ENCODE measurements at regions of chr22 and their contacts with region 1.

Region 1: GRCh38 chr22:41746567-41747400 is 47.5 kb downstream of the MEI1 start:
- DNase-seq: peak; percentile 42
- H3K4me3 ChIP-seq: no peak overlapping the region
- CTCF ChIP-seq: peak; percentile 91

Region 2: DNA sequence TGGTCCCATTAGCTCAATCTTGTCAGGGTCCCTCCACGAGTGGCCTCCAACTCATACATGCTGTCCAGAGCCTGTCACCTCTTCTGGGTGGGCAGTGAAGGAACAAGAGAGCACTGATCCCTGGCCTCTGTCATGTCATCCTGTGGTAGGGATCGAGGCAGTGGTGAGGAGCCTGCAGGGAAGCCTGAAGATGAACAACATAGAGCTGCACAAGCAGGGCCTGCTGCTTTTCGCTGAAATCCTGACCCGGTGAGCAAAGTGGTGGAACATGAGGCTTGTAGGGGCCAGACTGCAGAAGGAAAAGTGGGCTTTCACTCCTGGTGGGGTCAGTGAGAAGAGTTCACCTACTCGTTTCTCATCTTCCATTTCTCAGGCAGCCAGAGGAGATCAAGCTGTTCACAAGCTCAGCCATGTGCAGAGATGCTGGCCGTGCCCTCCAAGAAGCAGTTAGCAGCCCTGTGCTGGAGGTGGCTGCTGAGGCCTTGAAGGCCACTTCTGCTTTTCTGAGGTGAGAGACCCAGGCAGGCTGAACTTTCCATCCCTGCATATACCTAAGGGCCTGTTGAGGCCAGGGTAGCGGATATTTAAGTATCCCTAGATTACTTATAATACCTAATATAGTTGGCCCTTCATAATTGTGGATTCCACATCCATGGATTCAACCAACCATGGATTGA is 14.6 kb before region 1 on chr22:
- CTCF ChIA-PET with region 1: interaction called, 41 read pairs
- POLR2A ChIA-PET with region 1: no interaction called
- DNase-seq: no peak
- H3K4me3 ChIP-seq: no peak overlapping the region
- CTCF ChIP-seq: no peak

Region 3: DNA sequence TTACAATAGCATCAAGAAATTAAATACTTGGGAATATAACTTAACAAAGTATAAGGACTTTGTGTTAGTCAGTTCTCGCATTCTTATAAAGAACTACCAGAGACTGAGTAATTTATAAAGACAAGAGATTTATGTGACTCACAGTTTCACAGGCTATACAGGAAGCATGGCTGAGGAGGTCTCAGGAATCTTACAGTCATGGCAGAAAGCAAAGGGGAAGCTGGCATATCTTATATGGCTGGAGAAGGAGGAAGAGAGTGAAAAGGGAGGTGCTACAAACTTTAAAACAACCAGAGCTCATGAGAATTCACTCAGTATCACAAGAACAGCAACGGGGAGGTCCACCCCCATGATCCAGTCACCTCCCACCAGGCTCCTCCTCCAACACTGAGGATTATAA is 21.6 kb after region 1 on chr22:
- CTCF ChIA-PET with region 1: interaction called, 15 read pairs
- POLR2A ChIA-PET with region 1: no interaction called
- DNase-seq: no peak
- H3K4me3 ChIP-seq: no peak overlapping the region
- CTCF ChIP-seq: no peak

Region 4: DNA sequence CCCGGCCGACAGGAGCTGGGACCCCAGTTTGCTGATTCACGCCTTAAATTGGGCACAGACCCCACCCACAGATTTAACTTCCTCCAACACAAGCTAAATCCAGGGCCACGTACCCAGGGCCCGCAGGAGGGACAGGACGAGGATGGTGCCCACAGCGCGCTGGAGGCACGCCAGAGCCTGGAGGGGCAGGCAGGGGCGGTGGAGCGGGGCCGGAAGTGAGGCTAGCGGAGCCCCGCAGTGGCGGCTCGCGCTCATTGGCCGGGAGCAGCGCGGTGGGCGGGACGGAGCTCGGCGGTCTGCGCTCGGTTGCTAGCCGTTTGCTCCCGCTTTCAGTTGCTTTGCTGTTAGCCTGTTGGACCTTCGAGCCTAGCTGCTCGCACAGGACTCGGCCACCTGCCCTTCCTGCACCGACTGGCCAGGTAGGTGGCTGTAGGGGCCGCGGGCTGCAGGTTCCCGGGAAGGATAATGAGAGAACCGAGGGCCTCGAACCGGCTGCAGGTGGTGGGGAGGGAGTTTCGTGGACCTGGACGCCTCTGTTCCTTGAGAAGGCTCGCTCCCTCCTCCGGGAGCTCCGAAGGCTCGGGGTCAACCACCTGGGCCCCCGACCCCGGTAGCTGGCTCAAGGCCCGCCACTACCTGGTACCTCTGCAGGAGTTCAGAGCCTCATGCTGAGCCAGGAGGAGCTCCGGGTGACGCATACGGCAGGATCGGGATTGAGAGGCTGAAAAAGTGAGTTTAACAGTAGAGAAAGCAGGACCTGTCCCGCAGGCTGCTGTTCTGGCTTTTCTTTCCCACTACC is 53.8 kb after region 1 on chr22 and contains the start of gene CCDC134:
- CTCF ChIA-PET with region 1: interaction called, 15 read pairs
- POLR2A ChIA-PET with region 1: interaction called, 3 read pairs
- DNase-seq: no peak
- H3K4me3 ChIP-seq: peak within 1 kb of the TSS; percentile 99
- CTCF ChIP-seq: no peak

Region 5: GRCh38 chr22:41940832-41941765 is 194.3 kb after region 1 on chr22:
- CTCF ChIA-PET with region 1: interaction called, 251 read pairs
- POLR2A ChIA-PET with region 1: no interaction called
- DNase-seq: peak; percentile 52
- H3K4me3 ChIP-seq: no peak overlapping the region
- CTCF ChIP-seq: peak; percentile 93

Measured in AG04449 (cell line).